ENCODE measurements at regions of chr5 and their contacts with region 1.

Region 1: DNA sequence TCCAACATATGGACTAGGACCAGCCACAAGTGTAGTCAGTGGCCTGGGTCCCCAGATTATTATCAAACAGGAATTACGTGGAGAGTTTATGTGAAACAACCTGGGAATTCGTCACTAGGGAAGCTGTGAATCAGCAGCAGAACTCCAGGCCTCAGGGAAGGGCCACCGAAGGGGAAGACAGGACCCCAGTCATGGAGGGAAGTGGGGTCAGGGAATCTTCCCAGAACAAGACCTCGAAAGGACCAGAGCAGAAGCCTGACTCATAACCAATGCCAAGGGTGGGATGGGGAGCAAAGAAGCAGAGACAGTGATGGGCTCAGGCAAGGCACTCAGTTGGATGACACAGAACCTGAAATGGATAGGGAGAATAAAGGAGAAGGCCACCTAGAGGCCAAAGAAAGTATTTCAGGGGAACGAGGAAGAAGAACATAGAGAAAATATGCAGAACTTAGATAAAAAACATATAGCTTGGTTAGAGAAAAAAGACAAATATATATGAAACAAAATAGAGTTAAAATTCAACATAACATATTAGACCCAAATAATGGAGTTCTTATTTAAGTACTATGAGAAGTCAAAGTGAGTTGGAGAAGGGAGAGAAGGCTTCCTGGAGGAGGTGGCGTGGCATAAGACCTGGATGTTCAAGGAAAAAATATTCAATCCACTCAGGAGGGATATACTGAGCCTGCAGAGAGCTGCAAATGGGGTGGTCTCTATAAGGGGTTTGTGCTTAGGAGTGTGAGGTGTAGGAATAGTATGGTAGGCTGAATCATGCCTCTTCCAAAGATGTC is 66.7 kb upstream of the CAST start:
- DNase-seq: no peak
- ATAC-seq: no peak
- H3K4me3 ChIP-seq: no peak overlapping the region
- H3K27ac ChIP-seq: no peak overlapping the region
- H3K4me1 ChIP-seq: no peaks in the 10 kb centered on the region
- H3K27me3 ChIP-seq: no peaks in the 10 kb centered on the region
- CTCF ChIP-seq: peak in 6 of 7 experiments; percentile 30 to 59 (median 39)
- POLR2A ChIP-seq: no peak

Region 2: DNA sequence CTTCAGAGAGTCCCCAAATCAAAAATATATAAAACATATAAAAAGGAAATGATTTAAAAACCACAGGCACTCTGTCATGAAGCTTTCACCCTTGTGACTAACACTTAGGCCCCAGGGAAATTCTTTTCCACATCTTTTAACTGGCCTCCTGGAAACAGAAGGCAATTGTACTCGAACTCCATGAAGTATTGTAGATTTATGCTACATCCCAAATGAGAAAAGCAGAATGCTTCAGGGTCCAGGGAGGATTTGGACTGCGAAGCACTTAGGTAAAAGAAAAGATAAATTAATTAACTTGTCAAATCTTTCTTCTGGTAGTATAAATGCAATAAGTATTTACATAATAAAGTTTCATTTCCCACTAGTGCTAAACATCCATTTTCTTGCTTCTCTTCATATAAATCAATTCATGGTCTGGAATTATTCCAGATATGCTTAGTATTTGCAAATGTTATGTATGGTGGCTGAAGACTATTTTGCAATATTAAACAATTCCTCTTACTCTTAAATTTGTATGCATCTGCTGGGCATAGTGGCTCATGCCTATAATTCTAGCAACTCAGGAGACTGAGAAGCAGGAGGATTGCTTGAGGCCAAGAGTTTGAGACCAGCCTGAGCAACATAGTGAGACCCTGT is 569.0 kb before region 1 on chr5:
- intact Hi-C with region 1: no loop called
- DNase-seq: no peak
- ATAC-seq: no peak
- H3K4me3 ChIP-seq: no peak overlapping the region
- H3K27ac ChIP-seq: peak overlapping the region in 1 of 4 donors; percentile 86
- H3K4me1 ChIP-seq: peaks cover 41% of the 10 kb centered on the region
- H3K27me3 ChIP-seq: no peaks in the 10 kb centered on the region
- CTCF ChIP-seq: no peak
- POLR2A ChIP-seq: no peak

Region 3: GRCh38 chr5:96344678-96345577 is 250.6 kb before region 1 on chr5:
- intact Hi-C with region 1: loop called (anchors 5 kb)
- DNase-seq: peak; percentile 51 to 78 (median 68)
- ATAC-seq: peak; percentile 87
- H3K4me3 ChIP-seq: no peak overlapping the region
- H3K27ac ChIP-seq: peak overlapping the region; percentile 35 to 65 (median 58)
- H3K4me1 ChIP-seq: peaks cover 31% of the 10 kb centered on the region
- H3K27me3 ChIP-seq: no peaks in the 10 kb centered on the region
- CTCF ChIP-seq: peak; percentile 28 to 92 (median 81)
- POLR2A ChIP-seq: no peak